Dendritic cell treated with granulocyte-macrophage colony-stimulating factor and Interleukin-4, amounts not matched to agents 40 ng/mL and 50 ng/mL, for 4 days (primary cell): ENCODE measurements at regions of chrX and their contacts with region 1.

Region 1: GRCh38 chrX:85111347-85111746 is 107.7 kb downstream of the APOOL start:
- H3K4me3 Mint-ChIP-seq: no peak overlapping the region
- H3K27ac Mint-ChIP-seq: no peak overlapping the region
- H3K4me1 Mint-ChIP-seq: peaks cover 5% of the 10 kb centered on the region
- H3K27me3 Mint-ChIP-seq: no peaks in the 10 kb centered on the region

Region 2: DNA sequence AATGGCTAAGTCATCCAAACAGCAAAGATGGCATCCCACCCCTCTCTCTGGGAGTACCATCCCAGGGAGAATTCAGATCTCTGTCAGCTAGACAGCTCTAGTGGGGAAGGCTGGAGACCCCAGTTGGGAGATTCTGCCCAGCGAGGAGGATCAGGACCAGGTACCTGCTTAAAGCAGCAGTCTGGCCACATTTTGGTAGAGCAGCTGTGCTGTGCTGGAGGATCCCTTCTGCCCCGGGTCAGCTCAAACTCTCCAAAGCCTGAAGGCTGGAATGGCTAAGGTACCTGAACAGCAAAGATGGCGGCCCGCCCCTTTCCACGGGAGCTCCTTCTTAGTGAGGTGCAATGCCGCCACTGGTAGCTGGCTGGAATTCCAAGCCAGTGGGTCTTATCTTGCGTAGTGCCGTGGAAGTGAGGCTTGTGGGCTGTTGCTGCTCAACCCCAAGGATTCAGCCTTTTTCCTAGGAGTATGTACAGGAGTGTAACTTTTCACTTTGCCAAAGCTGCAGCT is 92.2 kb after region 1 on chrX:
- intact Hi-C with region 1: no loop called
- H3K4me3 Mint-ChIP-seq: no peak overlapping the region
- H3K27ac Mint-ChIP-seq: no peak overlapping the region
- H3K4me1 Mint-ChIP-seq: no peaks in the 10 kb centered on the region
- H3K27me3 Mint-ChIP-seq: no peaks in the 10 kb centered on the region

Region 3: GRCh38 chrX:85544609-85545008 is 433.3 kb after region 1 on chrX:
- intact Hi-C with region 1: loop called (anchors 10 kb)
- H3K4me3 Mint-ChIP-seq: no peak overlapping the region
- H3K27ac Mint-ChIP-seq: no peak overlapping the region
- H3K4me1 Mint-ChIP-seq: no peaks in the 10 kb centered on the region
- H3K27me3 Mint-ChIP-seq: no peaks in the 10 kb centered on the region